ENCODE measurements at regions of chr13 and their contacts with region 1.

Region 1: GRCh38 chr13:38866649-38867048 is 124.0 kb downstream of the STOML3 start:
- DNase-seq: peak; percentile 13
- H3K4me3 Mint-ChIP-seq: no peak overlapping the region
- H3K27ac Mint-ChIP-seq: no peak overlapping the region
- H3K4me1 Mint-ChIP-seq: no peaks in the 10 kb centered on the region
- H3K27me3 Mint-ChIP-seq: peaks cover 40% of the 10 kb centered on the region
- CTCF ChIP-seq: peak; percentile 11

Region 2: DNA sequence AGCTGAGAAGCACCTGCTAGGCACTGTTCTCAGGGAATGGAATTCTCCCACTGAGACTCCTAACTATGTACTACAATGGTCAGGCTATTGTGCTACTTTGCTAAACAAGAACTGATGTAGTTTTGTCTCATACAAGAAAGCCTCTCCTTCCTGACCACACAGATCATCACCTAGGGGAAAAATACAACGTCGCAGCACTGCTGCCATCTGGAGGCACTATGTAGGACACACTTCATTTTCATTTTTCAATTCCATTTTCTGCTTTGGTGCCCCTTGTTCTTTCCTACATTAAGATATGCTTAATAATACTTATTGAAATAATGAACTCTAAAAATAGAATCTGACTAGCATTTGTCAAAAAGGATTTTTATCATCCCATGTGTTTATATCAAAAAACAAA is 150.1 kb after region 1 on chr13:
- CTCF ChIA-PET with region 1: interaction called, 4 read pairs
- POLR2A ChIA-PET with region 1: interaction called, 3 read pairs
- intact Hi-C with region 1: loop called (anchors 5 kb)
- DNase-seq: peak; percentile 52
- H3K4me3 Mint-ChIP-seq: no peak overlapping the region
- H3K27ac Mint-ChIP-seq: no peak overlapping the region
- H3K4me1 Mint-ChIP-seq: no peaks in the 10 kb centered on the region
- H3K27me3 Mint-ChIP-seq: no peaks in the 10 kb centered on the region
- CTCF ChIP-seq: peak; percentile 41